Dendritic cell treated with granulocyte-macrophage colony-stimulating factor and Interleukin-4, amounts not matched to agents 40 ng/mL and 50 ng/mL, for 4 days (primary cell): ENCODE measurements at regions of chr11 and their contacts with region 1.

Region 1: GRCh38 chr11:61187505-61188130 is 15.7 kb upstream of the PGA3 start:
- H3K4me3 Mint-ChIP-seq: no peak overlapping the region
- H3K27ac Mint-ChIP-seq: no peak overlapping the region
- H3K4me1 Mint-ChIP-seq: peaks cover 21% of the 10 kb centered on the region
- H3K27me3 Mint-ChIP-seq: peaks cover 4% of the 10 kb centered on the region

Region 2: DNA sequence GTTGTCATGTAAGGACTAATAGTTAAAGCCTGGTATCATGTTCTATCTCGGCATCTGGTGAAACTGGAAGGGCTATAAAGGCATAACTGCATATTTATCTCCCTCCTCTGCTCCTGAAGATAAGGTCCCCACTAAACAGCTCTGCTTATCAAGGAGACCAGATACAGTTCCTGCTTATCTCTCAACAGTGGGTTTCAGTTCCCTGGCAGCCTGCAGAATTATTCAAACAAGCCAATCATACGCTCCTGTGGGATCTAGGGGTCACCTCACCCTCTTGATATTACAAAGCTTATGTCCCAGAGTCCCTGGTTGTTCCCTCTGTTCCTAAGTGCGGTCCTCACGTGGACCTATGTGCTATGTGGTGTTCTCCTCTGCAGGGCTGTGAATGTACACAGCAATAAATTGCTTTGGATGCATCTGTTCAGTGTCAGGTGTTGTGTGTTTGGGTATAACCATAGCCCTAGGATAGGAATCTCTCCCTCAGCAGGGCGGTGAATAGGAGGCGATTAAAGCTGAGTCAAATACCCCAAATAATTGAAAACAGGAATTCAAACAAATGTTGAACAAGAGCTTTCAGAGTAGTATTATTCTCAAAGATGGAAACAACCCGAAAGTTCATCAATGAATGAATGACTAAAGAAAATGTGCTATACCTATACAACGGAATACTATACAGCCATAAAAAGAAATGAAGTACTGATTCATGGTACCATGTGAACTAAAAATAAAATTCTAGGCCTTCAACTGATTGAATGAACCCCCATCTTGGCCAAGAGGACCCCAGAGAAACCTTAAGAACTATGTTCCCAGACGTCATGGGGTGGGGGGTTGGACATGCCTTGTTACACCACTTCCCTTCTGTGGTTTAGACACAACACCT is 1226.9 kb before region 1 on chr11:
- intact Hi-C with region 1: no loop called
- H3K4me3 Mint-ChIP-seq: no peak overlapping the region
- H3K27ac Mint-ChIP-seq: no peak overlapping the region
- H3K4me1 Mint-ChIP-seq: peaks cover 8% of the 10 kb centered on the region
- H3K27me3 Mint-ChIP-seq: no peaks in the 10 kb centered on the region

Region 3: GRCh38 chr11:61119055-61119454 is 68.6 kb before region 1 on chr11:
- intact Hi-C with region 1: no loop called
- H3K4me3 Mint-ChIP-seq: no peak overlapping the region
- H3K27ac Mint-ChIP-seq: no peak overlapping the region
- H3K4me1 Mint-ChIP-seq: peaks cover 32% of the 10 kb centered on the region
- H3K27me3 Mint-ChIP-seq: peaks cover 12% of the 10 kb centered on the region

Region 4: DNA sequence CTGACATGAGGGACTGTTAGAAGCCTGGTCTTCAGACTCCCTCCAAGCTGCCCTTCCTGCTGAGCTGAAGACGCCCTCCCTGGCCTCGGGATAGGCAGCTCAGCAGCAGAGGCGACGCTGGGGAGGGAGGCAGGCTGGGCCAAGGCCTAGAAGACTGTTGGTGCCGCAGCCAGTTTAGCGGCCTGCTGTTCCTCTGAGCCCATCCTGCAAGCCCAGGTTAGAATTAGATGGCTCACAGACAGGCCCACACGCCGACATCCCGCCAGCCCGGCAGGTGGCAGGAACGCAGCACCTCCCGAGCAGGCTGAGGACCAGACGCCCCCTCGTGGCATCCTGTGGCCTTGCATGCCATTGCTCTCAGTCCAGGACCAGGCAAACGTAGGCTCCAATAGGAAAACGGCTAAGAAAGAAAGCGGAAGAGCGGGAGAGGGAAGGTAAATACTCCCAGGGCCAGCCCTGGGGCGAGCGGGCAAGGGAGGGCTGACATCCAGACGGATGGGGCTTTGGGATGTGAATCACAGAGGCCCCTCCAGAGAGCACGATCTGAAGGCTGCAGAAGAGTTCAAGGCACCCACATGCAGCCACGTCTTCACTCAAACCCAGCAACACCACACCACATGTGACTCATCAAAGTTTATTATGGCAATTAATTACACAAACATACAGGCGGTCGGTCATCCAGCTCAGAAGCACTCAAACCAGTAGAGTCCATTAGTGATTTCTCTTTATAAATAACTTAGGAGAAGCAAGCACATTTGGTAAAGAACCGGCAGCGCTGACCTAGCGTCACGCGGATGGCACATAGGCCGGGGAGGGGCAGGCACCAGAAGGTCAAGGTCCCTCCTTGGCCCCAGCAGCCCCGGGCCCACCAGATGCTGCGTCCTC is 57.7 kb before region 1 on chr11:
- intact Hi-C with region 1: loop called (anchors 1 kb)
- H3K4me3 Mint-ChIP-seq: peak overlapping the region; percentile 13
- H3K27ac Mint-ChIP-seq: peak overlapping the region; percentile 60
- H3K4me1 Mint-ChIP-seq: peaks cover 25% of the 10 kb centered on the region
- H3K27me3 Mint-ChIP-seq: no peaks in the 10 kb centered on the region

Region 5: GRCh38 chr11:61149624-61150619 is 37.7 kb before region 1 on chr11:
- intact Hi-C with region 1: loop called (anchors 5 kb)
- H3K4me3 Mint-ChIP-seq: no peak overlapping the region
- H3K27ac Mint-ChIP-seq: peak overlapping the region; percentile 41
- H3K4me1 Mint-ChIP-seq: peaks cover 97% of the 10 kb centered on the region
- H3K27me3 Mint-ChIP-seq: no peaks in the 10 kb centered on the region